ENCODE measurements at regions of chr11 and their contacts with region 1.

Region 1: DNA sequence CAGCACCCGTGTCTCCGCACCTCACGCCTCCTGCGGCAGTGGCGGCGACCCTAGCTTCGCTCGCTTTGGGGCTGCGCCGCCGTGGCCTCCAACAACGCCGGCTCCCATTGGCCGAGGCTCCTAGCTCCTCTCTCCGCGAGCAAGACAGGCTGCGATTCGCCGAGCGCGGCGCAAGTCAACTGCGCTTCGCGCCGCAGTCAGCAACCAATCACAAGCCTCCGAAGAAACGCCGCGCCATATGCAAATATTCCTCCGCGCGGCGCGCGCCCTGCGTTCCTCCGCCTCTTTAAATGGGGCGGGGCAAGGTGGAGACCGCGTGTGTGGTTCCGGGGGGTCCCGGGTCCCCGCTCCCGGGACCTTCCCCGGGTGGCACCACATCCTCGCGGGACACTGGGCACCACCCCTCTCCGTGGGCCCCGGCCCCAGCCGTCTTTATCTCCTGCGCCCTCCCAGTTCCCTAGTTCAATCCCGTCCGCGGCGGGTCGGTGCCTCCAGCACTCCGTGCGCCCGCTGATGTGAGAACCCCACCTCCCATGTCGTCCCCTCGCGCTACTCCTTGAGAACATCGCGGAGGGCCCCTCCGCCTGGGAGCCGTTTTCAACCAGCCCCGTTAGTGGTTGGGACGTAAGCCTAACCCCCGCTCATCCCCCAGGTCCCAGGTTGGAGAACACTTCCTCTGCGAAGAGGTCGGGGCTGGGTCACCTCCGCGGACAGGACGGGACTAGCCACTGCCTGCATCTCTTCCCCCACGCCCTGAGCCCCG is at the start of gene NAP1L4:
- DNase-seq: peak; percentile 88 to 97 (median 95)
- ATAC-seq: peak; percentile 93
- H3K4me3 ChIP-seq: peak within 1 kb of the TSS; percentile 93
- H3K4me3 Mint-ChIP-seq: peak within 1 kb of the TSS; percentile 94 to 100 (median 98)
- H3K27ac ChIP-seq: peak within 1 kb of the TSS; percentile 90
- H3K27ac Mint-ChIP-seq: peak within 1 kb of the TSS; percentile 92 to 99 (median 97)
- H3K4me1 ChIP-seq: peaks cover 2 to 4% of the 10 kb centered on the region in 2 donors
- H3K4me1 Mint-ChIP-seq: peaks cover 23 to 36% (median 27%) of the 10 kb centered on the region in 7 donors
- H3K27me3 ChIP-seq: no peaks in the 10 kb centered on the region
- H3K27me3 Mint-ChIP-seq: no peaks in the 10 kb centered on the region
- total RNA-seq, gene NAP1L4: 245 to 356 (median 294) TPM

Region 2: GRCh38 chr11:2298795-2299761 is 693.3 kb before region 1 on chr11:
- CTCF ChIA-PET with region 1: no interaction called
- POLR2A ChIA-PET with region 1: no interaction called
- intact Hi-C with region 1: loop called in 1 of 2 experiments (anchors 5 kb)
- DNase-seq: peak in 2 of 9 donors; percentile 30 to 32
- ATAC-seq: no peak
- H3K4me3 ChIP-seq: no peak overlapping the region
- H3K4me3 Mint-ChIP-seq: peak overlapping the region; percentile 52 to 98 (median 75)
- H3K27ac ChIP-seq: peak overlapping the region; percentile 58
- H3K27ac Mint-ChIP-seq: peak overlapping the region; percentile 63 to 91 (median 79)
- H3K4me1 ChIP-seq: peaks cover 30 to 44% of the 10 kb centered on the region in 2 donors
- H3K4me1 Mint-ChIP-seq: peaks cover 19 to 51% (median 38%) of the 10 kb centered on the region in 7 donors
- H3K27me3 ChIP-seq: no peaks in the 10 kb centered on the region
- H3K27me3 Mint-ChIP-seq: peaks cover 0 to 5% (median 0%) of the 10 kb centered on the region in 5 donors

Region 3: GRCh38 chr11:2315395-2316168 is 676.8 kb before region 1 on chr11:
- CTCF ChIA-PET with region 1: no interaction called
- POLR2A ChIA-PET with region 1: no interaction called
- intact Hi-C with region 1: no loop called
- DNase-seq: no peak
- ATAC-seq: no peak
- H3K4me3 ChIP-seq: no peak overlapping the region
- H3K4me3 Mint-ChIP-seq: no peak overlapping the region
- H3K27ac ChIP-seq: no peak overlapping the region
- H3K27ac Mint-ChIP-seq: no peak overlapping the region
- H3K4me1 ChIP-seq: no peaks in the 10 kb centered on the region
- H3K4me1 Mint-ChIP-seq: peaks cover 0 to 14% (median 10%) of the 10 kb centered on the region in 7 donors
- H3K27me3 ChIP-seq: no peaks in the 10 kb centered on the region
- H3K27me3 Mint-ChIP-seq: no peaks in the 10 kb centered on the region

Region 4: DNA sequence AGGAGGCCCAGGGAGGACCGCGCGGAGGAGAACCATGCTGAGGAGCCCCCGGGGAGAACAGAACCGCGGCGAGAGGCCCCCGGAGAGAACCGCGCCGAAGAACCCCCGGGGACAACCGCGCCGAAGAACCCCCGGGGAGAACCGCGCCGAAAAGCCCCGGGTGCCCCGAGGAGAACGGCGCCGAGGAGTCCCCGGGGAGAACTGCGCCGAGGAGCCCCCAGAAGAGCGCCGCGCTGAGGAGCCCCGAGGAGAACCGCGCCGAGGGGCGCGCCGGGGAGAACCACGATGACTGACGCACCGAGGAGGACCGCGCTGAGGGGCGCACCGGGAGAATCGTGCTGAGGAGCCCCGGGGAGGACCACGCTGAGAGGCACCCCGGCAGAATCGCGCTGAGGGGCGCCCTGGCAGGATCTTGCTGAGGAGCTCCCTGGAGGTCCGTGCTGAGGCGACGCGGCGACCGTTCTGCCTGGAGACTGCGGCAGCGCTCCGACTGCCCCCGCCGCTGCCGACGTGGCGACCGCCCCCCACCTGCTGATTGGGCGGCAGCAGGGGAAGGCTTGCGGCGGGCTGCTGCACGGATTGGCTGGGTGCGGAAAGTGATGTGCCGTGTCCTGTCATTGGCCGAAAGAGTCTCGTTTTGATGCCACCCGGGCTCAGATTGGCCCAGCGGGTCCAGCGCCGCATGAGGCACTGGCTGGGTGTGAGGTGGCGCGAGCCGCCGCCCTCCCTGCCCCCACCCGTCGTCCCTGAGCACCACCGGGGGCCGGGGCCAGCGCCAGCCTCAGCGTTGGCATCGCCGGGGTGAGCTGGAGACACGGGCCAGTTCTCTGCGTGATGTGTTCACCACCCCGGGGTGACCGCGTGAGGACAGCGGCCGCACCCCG is 292.6 kb before region 1 on chr11 and contains the start of gene KCNQ1OT1:
- CTCF ChIA-PET with region 1: no interaction called
- POLR2A ChIA-PET with region 1: no interaction called
- intact Hi-C with region 1: loop called in 1 of 2 experiments (anchors 5 kb)
- DNase-seq: peak; percentile 72 to 89 (median 85)
- ATAC-seq: peak; percentile 96
- H3K4me3 ChIP-seq: peak within 1 kb of the TSS; percentile 57
- H3K4me3 Mint-ChIP-seq: peak within 1 kb of the TSS; percentile 27 to 89 (median 72)
- H3K27ac ChIP-seq: peak within 1 kb of the TSS; percentile 61
- H3K27ac Mint-ChIP-seq: peak within 1 kb of the TSS in 6 of 9 donors; percentile 14 to 77 (median 50)
- H3K4me1 ChIP-seq: peaks cover 2 to 4% of the 10 kb centered on the region in 2 donors
- H3K4me1 Mint-ChIP-seq: peaks cover 0 to 20% (median 10%) of the 10 kb centered on the region in 7 donors
- H3K27me3 ChIP-seq: no peaks in the 10 kb centered on the region
- H3K27me3 Mint-ChIP-seq: peaks cover 0 to 5% (median 0%) of the 10 kb centered on the region in 5 donors
- total RNA-seq, gene KCNQ1OT1: 0.16 to 0.56 (median 0.24) TPM

Region 5: DNA sequence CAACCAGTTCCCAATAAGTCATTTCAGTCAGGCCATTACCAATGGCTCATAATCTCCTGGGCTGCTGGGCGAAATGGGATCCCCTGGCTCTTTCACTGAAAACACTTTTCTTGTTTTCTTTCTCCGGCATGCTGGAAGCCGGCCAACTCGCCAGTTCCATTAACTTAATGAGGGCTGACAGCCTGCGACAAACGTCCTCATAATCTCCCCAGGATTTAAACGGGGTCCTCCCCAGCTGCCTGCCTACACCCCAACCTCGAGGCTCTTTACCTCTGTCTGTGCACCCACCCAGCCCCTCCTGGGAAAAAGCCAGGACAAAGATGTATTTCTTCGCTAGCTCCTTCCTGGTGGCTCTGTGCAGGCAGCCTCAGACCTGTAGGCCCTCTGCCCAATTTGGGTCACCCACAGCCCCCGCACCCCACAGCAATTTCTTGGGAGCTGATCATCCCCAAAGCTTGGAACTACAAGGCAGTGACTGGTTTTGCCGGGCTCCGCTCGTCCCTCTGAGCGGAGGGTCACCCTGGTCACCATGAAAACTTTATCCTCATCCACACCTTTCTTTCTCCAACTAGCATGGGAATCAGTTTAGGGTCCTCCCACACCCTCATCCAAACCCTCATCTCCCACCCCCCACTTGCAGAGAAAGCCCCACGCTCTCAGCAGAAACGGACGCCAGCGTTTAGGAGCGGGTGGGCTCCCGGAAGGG is 241.6 kb before region 1 on chr11:
- CTCF ChIA-PET with region 1: no interaction called
- POLR2A ChIA-PET with region 1: no interaction called
- intact Hi-C with region 1: no loop called
- DNase-seq: no peak
- ATAC-seq: no peak
- H3K4me3 ChIP-seq: no peak overlapping the region
- H3K4me3 Mint-ChIP-seq: no peak overlapping the region
- H3K27ac ChIP-seq: no peak overlapping the region
- H3K27ac Mint-ChIP-seq: no peak overlapping the region
- H3K4me1 ChIP-seq: no peaks in the 10 kb centered on the region
- H3K4me1 Mint-ChIP-seq: peaks cover 0 to 6% (median 0%) of the 10 kb centered on the region in 7 donors
- H3K27me3 ChIP-seq: no peaks in the 10 kb centered on the region
- H3K27me3 Mint-ChIP-seq: no peaks in the 10 kb centered on the region

Region 6: DNA sequence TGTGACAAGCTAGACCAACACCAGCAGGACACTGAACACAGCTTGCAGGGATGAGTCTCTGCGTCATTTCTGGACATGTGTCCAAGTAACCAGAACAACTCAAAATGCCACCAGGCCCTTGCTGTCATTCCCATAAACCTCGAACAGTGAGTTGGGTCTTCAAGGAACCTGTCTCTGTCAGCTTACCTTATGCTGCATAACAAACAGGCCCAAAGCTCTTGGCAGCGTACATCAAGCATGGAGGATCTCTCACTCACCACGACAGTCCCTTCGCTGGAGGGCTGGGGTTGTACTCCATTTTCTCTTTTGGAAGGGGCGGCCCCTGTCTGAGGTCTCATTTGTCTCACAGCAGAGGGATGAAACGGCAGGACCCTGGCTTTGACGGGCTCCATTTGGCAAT is 113.6 kb before region 1 on chr11:
- CTCF ChIA-PET with region 1: no interaction called
- POLR2A ChIA-PET with region 1: no interaction called
- intact Hi-C with region 1: no loop called
- DNase-seq: no peak
- ATAC-seq: no peak
- H3K4me3 ChIP-seq: no peak overlapping the region
- H3K4me3 Mint-ChIP-seq: no peak overlapping the region
- H3K27ac ChIP-seq: no peak overlapping the region
- H3K27ac Mint-ChIP-seq: no peak overlapping the region
- H3K4me1 ChIP-seq: no peaks in the 10 kb centered on the region
- H3K4me1 Mint-ChIP-seq: peaks cover 0 to 6% (median 2%) of the 10 kb centered on the region in 7 donors
- H3K27me3 ChIP-seq: no peaks in the 10 kb centered on the region
- H3K27me3 Mint-ChIP-seq: peaks cover 0 to 34% (median 10%) of the 10 kb centered on the region in 5 donors

Region 7: GRCh38 chr11:2945031-2945756 is 47.2 kb before region 1 on chr11:
- CTCF ChIA-PET with region 1: no interaction called
- POLR2A ChIA-PET with region 1: no interaction called
- intact Hi-C with region 1: loop called in 1 of 2 experiments (anchors 2 kb)
- DNase-seq: peak in 7 of 9 donors; percentile 33 to 65 (median 48)
- ATAC-seq: peak; percentile 52
- H3K4me3 ChIP-seq: no peak overlapping the region
- H3K4me3 Mint-ChIP-seq: peak overlapping the region; percentile 25 to 76 (median 56)
- H3K27ac ChIP-seq: peak overlapping the region; percentile 41
- H3K27ac Mint-ChIP-seq: peak overlapping the region; percentile 0 to 86 (median 80)
- H3K4me1 ChIP-seq: peaks cover 0 to 17% of the 10 kb centered on the region in 2 donors
- H3K4me1 Mint-ChIP-seq: peaks cover 27 to 66% (median 59%) of the 10 kb centered on the region in 7 donors
- H3K27me3 ChIP-seq: no peaks in the 10 kb centered on the region
- H3K27me3 Mint-ChIP-seq: no peaks in the 10 kb centered on the region

Region 8: GRCh38 chr11:3014057-3014938 is 21.9 kb after region 1 on chr11:
- CTCF ChIA-PET with region 1: interaction called, 16 read pairs
- POLR2A ChIA-PET with region 1: interaction called, 142 read pairs
- intact Hi-C with region 1: loop called (anchors 1 kb)
- DNase-seq: peak; percentile 43 to 95 (median 90)
- ATAC-seq: peak; percentile 93
- H3K4me3 ChIP-seq: peak overlapping the region; percentile 46
- H3K4me3 Mint-ChIP-seq: peak overlapping the region; percentile 60 to 82 (median 72)
- H3K27ac ChIP-seq: peak overlapping the region; percentile 45
- H3K27ac Mint-ChIP-seq: peak overlapping the region; percentile 80 to 97 (median 93)
- H3K4me1 ChIP-seq: peaks cover 30 to 36% of the 10 kb centered on the region in 2 donors
- H3K4me1 Mint-ChIP-seq: peaks cover 11 to 60% (median 40%) of the 10 kb centered on the region in 7 donors
- H3K27me3 ChIP-seq: no peaks in the 10 kb centered on the region
- H3K27me3 Mint-ChIP-seq: no peaks in the 10 kb centered on the region

Region 9: DNA sequence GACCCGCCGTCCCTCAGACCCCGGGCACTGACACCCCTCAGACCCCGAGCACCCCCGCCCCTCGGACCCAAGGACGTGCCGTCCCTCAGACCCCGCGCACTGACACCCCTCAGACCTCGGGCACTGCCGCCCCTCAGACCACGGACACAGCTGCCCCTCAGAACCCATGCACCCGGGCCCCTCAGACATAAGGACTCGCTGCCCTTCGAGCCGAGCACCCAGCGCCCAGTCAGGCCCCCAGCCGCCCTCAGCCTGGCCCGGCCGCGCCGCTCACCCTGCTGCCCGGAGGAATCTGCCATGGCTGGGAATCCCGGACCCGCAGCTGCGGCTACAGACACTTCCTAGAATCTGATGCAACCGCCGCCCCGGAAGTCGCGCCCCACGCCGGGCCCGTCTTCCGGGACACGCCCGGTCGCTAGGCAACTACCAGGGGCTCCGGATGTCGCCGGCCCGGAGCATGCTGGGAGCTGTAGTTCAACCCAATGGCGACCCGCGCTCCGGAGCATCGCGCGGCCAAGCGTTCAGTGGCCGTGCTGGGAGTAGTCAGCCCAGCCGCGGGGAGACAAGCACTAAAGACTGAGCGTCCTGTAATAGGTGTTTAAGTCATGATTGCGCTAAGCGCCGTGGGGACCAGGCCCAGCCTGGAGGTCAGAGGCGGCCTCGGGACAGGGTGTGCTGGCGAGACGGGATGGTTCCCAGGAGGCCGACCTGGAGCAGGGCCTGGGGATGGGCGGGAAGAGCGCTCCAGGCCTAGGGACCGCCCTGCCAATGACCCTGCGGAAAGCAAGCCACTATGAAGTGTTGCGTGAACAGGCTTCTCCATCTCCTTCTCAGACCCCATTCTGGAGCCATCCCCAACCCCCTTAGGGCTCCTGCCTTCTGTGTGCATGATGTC is 64.9 kb after region 1 on chr11 and contains the start of gene CARS1:
- CTCF ChIA-PET with region 1: no interaction called
- POLR2A ChIA-PET with region 1: interaction called, 4 read pairs
- intact Hi-C with region 1: loop called (anchors 1 kb)
- DNase-seq: peak; percentile 82 to 93 (median 89)
- ATAC-seq: peak; percentile 99
- H3K4me3 ChIP-seq: peak within 1 kb of the TSS; percentile 85
- H3K4me3 Mint-ChIP-seq: peak within 1 kb of the TSS; percentile 86 to 95 (median 89)
- H3K27ac ChIP-seq: peak within 1 kb of the TSS; percentile 91
- H3K27ac Mint-ChIP-seq: peak within 1 kb of the TSS; percentile 44 to 89 (median 87)
- H3K4me1 ChIP-seq: peaks cover 14% of the 10 kb centered on the region in 2 donors
- H3K4me1 Mint-ChIP-seq: peaks cover 25 to 42% (median 39%) of the 10 kb centered on the region in 7 donors
- H3K27me3 ChIP-seq: no peaks in the 10 kb centered on the region
- H3K27me3 Mint-ChIP-seq: no peaks in the 10 kb centered on the region
- total RNA-seq, gene CARS1: 27.8 to 70.4 (median 53.7) TPM